ENCODE measurements at regions of chr5 and their contacts with region 1.

Region 1: GRCh38 chr5:169980418-169981053 is at the start of gene INSYN2B:
- DNase-seq: peak; percentile 60
- ATAC-seq: peak; percentile 97
- total RNA-seq, gene INSYN2B: 0.50 TPM

Region 2: GRCh38 chr5:169701910-169702451 is 278.6 kb before region 1 on chr5:
- intact Hi-C with region 1: loop called (anchors 5 kb)
- DNase-seq: no peak
- ATAC-seq: peak; percentile 51

Region 3: GRCh38 chr5:170173235-170173634 is 192.7 kb after region 1 on chr5:
- intact Hi-C with region 1: no loop called
- DNase-seq: no peak
- ATAC-seq: no peak